Activated CD4-positive, alpha-beta T cell treated with anti-CD3 and anti-CD28 coated beads for 36 hours (primary cell): ENCODE measurements at regions of chr17 and their contacts with region 1.

Region 1: GRCh38 chr17:35373534-35373983 is at the start of gene SLFN11:
- DNase-seq: peak; percentile 95
- ATAC-seq: peak; percentile 70
- H3K4me3 Mint-ChIP-seq: peak within 1 kb of the TSS; percentile 85
- H3K27ac Mint-ChIP-seq: peak within 1 kb of the TSS; percentile 98
- H3K4me1 Mint-ChIP-seq: peaks cover 50% of the 10 kb centered on the region
- H3K27me3 Mint-ChIP-seq: peaks cover 1% of the 10 kb centered on the region
- total RNA-seq, gene SLFN11: 63.7 to 67.9 TPM

Region 2: DNA sequence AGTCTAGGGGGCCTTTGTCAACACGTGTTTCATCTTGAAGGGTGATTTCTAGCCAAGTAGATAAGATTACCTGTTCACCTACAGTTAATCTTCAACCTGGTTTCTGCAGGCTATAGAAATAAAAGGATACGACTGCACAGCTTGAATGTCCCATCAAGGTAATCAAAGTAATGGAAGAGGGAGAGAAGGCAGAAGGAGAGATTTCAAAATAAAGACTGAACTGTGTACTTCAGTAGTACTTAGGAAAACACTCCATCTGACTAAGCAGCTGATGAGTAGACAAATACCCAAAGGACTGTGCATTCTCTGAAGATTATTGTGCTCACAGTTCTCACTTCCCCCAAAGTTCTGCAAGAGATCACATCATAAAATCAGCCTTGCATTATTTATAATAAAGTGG is 304.2 kb before region 1 on chr17:
- CTCF ChIA-PET with region 1: no interaction called
- POLR2A ChIA-PET with region 1: interaction called, 4 read pairs
- intact Hi-C with region 1: loop called in 1 of 2 experiments (anchors 5 kb)
- DNase-seq: no peak
- ATAC-seq: peak; percentile 16
- H3K4me3 Mint-ChIP-seq: no peak overlapping the region
- H3K27ac Mint-ChIP-seq: no peak overlapping the region
- H3K4me1 Mint-ChIP-seq: peaks cover 72% of the 10 kb centered on the region
- H3K27me3 Mint-ChIP-seq: no peaks in the 10 kb centered on the region

Region 3: DNA sequence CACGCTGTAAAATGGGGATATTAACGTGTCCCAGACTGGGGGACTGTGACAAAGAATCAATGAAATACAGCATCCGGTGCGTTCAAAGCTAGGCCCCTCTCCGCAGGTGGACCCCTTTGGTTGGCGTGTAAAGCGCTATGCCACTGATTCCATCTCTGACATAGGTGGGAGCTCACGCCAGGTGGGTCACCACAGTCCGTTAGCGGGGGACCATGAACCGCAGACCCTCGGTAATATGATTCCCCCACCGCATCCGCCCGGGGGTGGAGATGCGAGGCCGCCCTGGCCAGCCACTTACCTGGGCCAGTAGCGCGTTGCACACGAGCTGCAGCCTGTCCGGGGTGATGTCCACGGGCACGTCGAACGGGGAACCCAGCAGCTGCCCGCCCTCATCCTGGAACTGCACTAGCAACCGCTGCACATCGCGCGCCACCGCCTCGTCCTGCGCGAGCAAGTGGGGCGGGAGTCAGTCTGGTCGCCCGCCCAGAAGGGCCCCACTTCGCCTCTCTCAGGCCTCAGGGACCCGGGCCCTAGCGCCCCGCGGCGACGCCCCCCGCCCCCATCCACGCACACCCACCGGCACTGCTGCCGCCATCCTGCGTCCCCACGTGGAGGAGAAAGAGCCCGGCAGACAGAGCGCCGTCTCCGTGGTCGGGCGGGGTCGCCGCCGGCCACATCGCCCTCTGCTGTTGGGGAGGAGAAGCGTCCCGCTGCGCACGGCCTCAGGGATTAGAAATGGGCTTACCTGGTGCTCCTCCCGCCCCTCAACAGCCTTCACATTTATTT is 231.7 kb before region 1 on chr17 and contains the start of gene NLE1:
- CTCF ChIA-PET with region 1: no interaction called
- POLR2A ChIA-PET with region 1: no interaction called
- intact Hi-C with region 1: loop called in 1 of 2 experiments (anchors 5 kb)
- DNase-seq: peak; percentile 94
- ATAC-seq: peak; percentile 93
- H3K4me3 Mint-ChIP-seq: peak within 1 kb of the TSS; percentile 80
- H3K27ac Mint-ChIP-seq: peak within 1 kb of the TSS; percentile 81
- H3K4me1 Mint-ChIP-seq: peaks cover 14% of the 10 kb centered on the region
- H3K27me3 Mint-ChIP-seq: no peaks in the 10 kb centered on the region
- total RNA-seq, gene NLE1: 38.1 to 40.6 TPM

Region 4: GRCh38 chr17:35170968-35171771 is 202.4 kb before region 1 on chr17:
- CTCF ChIA-PET with region 1: interaction called, 4 read pairs
- POLR2A ChIA-PET with region 1: no interaction called
- intact Hi-C with region 1: loop called in 1 of 2 experiments (anchors 5 kb)
- DNase-seq: peak; percentile 32
- ATAC-seq: peak; percentile 76
- H3K4me3 Mint-ChIP-seq: no peak overlapping the region
- H3K27ac Mint-ChIP-seq: peak overlapping the region; percentile 47
- H3K4me1 Mint-ChIP-seq: peaks cover 39% of the 10 kb centered on the region
- H3K27me3 Mint-ChIP-seq: no peaks in the 10 kb centered on the region

Region 5: GRCh38 chr17:35432176-35433074 is 58.9 kb after region 1 on chr17 and contains the start of gene SLFN12:
- CTCF ChIA-PET with region 1: no interaction called
- POLR2A ChIA-PET with region 1: interaction called, 7 read pairs
- intact Hi-C with region 1: loop called in 1 of 2 experiments (anchors 2 kb)
- DNase-seq: peak; percentile 63
- ATAC-seq: peak; percentile 83
- H3K4me3 Mint-ChIP-seq: peak within 1 kb of the TSS; percentile 90
- H3K27ac Mint-ChIP-seq: peak within 1 kb of the TSS; percentile 98
- H3K4me1 Mint-ChIP-seq: peaks cover 40% of the 10 kb centered on the region
- H3K27me3 Mint-ChIP-seq: no peaks in the 10 kb centered on the region
- total RNA-seq, gene SLFN12: 5.4 TPM

Region 6: GRCh38 chr17:35448214-35448898 is 74.8 kb after region 1 on chr17 and contains the start of gene SLFN13:
- CTCF ChIA-PET with region 1: no interaction called
- POLR2A ChIA-PET with region 1: no interaction called
- intact Hi-C with region 1: loop called in 1 of 2 experiments (anchors 1 kb)
- DNase-seq: peak; percentile 97
- ATAC-seq: peak; percentile 97
- H3K4me3 Mint-ChIP-seq: peak within 1 kb of the TSS; percentile 46
- H3K27ac Mint-ChIP-seq: peak within 1 kb of the TSS; percentile 51
- H3K4me1 Mint-ChIP-seq: peaks cover 15% of the 10 kb centered on the region
- H3K27me3 Mint-ChIP-seq: no peaks in the 10 kb centered on the region
- total RNA-seq, gene SLFN13: 18.6 to 22.5 TPM

Region 7: GRCh38 chr17:35486920-35487732 is 113.6 kb after region 1 on chr17:
- CTCF ChIA-PET with region 1: no interaction called
- POLR2A ChIA-PET with region 1: interaction called, 14 read pairs
- intact Hi-C with region 1: loop called (anchors 1 to 2 kb)
- DNase-seq: peak; percentile 92
- ATAC-seq: peak; percentile 71
- H3K4me3 Mint-ChIP-seq: peak overlapping the region; percentile 82
- H3K27ac Mint-ChIP-seq: peak overlapping the region; percentile 91
- H3K4me1 Mint-ChIP-seq: peaks cover 36% of the 10 kb centered on the region
- H3K27me3 Mint-ChIP-seq: peaks cover 11% of the 10 kb centered on the region

Region 8: GRCh38 chr17:35963663-35964062 is 590.1 kb after region 1 on chr17:
- CTCF ChIA-PET with region 1: no interaction called
- POLR2A ChIA-PET with region 1: no interaction called
- intact Hi-C with region 1: no loop called
- DNase-seq: no peak
- ATAC-seq: no peak
- H3K4me3 Mint-ChIP-seq: no peak overlapping the region
- H3K27ac Mint-ChIP-seq: no peak overlapping the region
- H3K4me1 Mint-ChIP-seq: no peaks in the 10 kb centered on the region
- H3K27me3 Mint-ChIP-seq: peaks cover 3% of the 10 kb centered on the region